Thyroid gland (tissue), 4 donors: ENCODE measurements at regions of chr10 and their contacts with region 1.

Region 1: GRCh38 chr10:16843252-16843870 is 26.1 kb upstream of the RSU1 start:
- DNase-seq: no peak
- H3K4me3 ChIP-seq: no peak overlapping the region
- H3K27ac ChIP-seq: no peak overlapping the region
- H3K4me1 ChIP-seq: peaks cover 4 to 7% of the 10 kb centered on the region in 2 donors
- H3K27me3 ChIP-seq: no peaks in the 10 kb centered on the region
- CTCF ChIP-seq: peak; percentile 19 to 86 (median 54)
- POLR2A ChIP-seq: no peak

Region 2: GRCh38 chr10:17257466-17258321 is 414.3 kb after region 1 on chr10:
- intact Hi-C with region 1: loop called (anchors 5 kb)
- DNase-seq: peak; percentile 42
- H3K4me3 ChIP-seq: no peak overlapping the region
- H3K27ac ChIP-seq: no peak overlapping the region
- H3K4me1 ChIP-seq: peaks cover 0 to 4% of the 10 kb centered on the region in 2 donors
- H3K27me3 ChIP-seq: no peaks in the 10 kb centered on the region
- CTCF ChIP-seq: peak; percentile 39 to 92 (median 87)
- POLR2A ChIP-seq: no peak